Kidney (tissue), 22 donors: ENCODE measurements at regions of chr6 and their contacts with region 1.

Region 1: GRCh38 chr6:106444777-106445507 is 84.4 kb downstream of the CRYBG1 start:
- DNase-seq: peak in 2 of 5 donors; percentile 64 to 73
- H3K4me3 ChIP-seq: no peak overlapping the region
- H3K27ac ChIP-seq: peak overlapping the region in 1 of 2 donors; percentile 5
- H3K4me1 ChIP-seq: peaks cover 0 to 6% (median 6%) of the 10 kb centered on the region in 3 donors
- H3K27me3 ChIP-seq: no peaks in the 10 kb centered on the region
- CTCF ChIP-seq: peak; percentile 72

Region 2: GRCh38 chr6:106287205-106287604 is 157.7 kb before region 1 on chr6:
- intact Hi-C with region 1: no loop called
- DNase-seq: no peak
- H3K4me3 ChIP-seq: no peak overlapping the region
- H3K27ac ChIP-seq: no peak overlapping the region
- H3K4me1 ChIP-seq: no peaks in the 10 kb centered on the region
- H3K27me3 ChIP-seq: no peaks in the 10 kb centered on the region
- CTCF ChIP-seq: no peak

Region 3: GRCh38 chr6:106560996-106561685 is 116.2 kb after region 1 on chr6:
- intact Hi-C with region 1: loop called (anchors 10 kb)
- DNase-seq: no peak
- H3K4me3 ChIP-seq: no peak overlapping the region
- H3K27ac ChIP-seq: no peak overlapping the region
- H3K4me1 ChIP-seq: no peaks in the 10 kb centered on the region
- H3K27me3 ChIP-seq: no peaks in the 10 kb centered on the region
- CTCF ChIP-seq: no peak

Region 4: DNA sequence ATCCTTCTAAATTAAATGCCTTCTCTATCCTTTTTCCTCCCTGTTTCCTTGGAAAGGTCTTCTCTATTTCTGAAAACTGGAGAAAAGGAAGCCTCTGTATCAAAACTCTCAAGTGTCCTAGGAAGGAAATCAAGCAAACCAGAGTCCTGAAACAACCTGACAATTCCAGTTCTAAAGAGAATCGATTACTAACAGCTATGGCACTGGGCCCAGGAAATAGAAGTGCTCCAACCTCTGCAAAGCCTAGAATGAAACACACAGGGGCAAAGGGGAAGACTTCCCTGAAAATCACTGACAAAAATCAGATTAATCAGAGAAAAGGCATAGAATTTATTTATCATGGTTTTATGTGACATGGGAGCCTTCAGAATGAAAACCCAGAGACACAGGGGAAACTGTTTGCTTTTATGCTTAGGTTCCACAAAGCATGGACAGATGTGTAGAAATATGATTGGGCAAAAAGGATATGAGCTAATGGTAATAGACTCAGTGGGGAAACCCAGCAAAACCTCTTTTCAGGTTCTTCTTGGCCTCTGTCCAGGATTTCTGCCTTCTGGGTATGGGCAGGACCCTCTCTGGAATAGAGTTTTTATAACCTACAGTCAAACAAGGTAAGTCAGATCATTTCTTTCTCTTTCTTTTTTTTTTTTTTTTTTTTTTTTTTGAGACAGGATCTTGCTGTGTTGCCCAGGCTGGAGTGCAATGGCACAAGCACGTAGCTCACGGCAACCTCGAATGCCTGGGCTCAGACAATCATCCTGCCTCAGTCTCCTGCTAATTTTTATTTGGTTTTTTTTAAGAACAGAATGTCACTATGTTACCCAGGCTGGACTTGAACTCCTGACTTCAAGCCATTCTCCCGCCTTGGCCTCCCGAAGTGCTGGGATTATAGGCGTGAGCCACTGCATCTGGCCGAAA is 437.9 kb after region 1 on chr6:
- intact Hi-C with region 1: no loop called
- DNase-seq: peak in 1 of 5 donors; percentile 32
- H3K4me3 ChIP-seq: no peak overlapping the region
- H3K27ac ChIP-seq: peak overlapping the region; percentile 13 to 16
- H3K4me1 ChIP-seq: peaks cover 0 to 2% (median 0%) of the 10 kb centered on the region in 3 donors
- H3K27me3 ChIP-seq: no peaks in the 10 kb centered on the region
- CTCF ChIP-seq: no peak

Region 5: GRCh38 chr6:106981926-106982325 is 537.0 kb after region 1 on chr6:
- intact Hi-C with region 1: loop called (anchors 10 kb)
- DNase-seq: no peak
- H3K4me3 ChIP-seq: no peak overlapping the region
- H3K27ac ChIP-seq: no peak overlapping the region
- H3K4me1 ChIP-seq: no peaks in the 10 kb centered on the region
- H3K27me3 ChIP-seq: no peaks in the 10 kb centered on the region
- CTCF ChIP-seq: no peak